Ovary (tissue), 10 donors: ENCODE measurements at regions of chr9 and their contacts with region 1.

Region 1: GRCh38 chr9:133149126-133150107 is 14.3 kb downstream of the GBGT1 start:
- DNase-seq: peak; percentile 91 to 94 (median 93)
- H3K4me3 ChIP-seq: peak overlapping the region; percentile 65
- H3K27ac ChIP-seq: peak overlapping the region; percentile 76 to 95
- H3K4me1 ChIP-seq: peaks cover 6% of the 10 kb centered on the region
- H3K27me3 ChIP-seq: no peaks in the 10 kb centered on the region
- CTCF ChIP-seq: peak in 1 of 3 donors; percentile 18
- EP300 ChIP-seq: no peak
- POLR2A ChIP-seq: peak; percentile 27

Region 2: GRCh38 chr9:133035669-133036068 is 113.7 kb before region 1 on chr9:
- intact Hi-C with region 1: loop called (anchors 5 to 10 kb)
- DNase-seq: no peak
- H3K4me3 ChIP-seq: no peak overlapping the region
- H3K27ac ChIP-seq: no peak overlapping the region
- H3K4me1 ChIP-seq: peaks cover 8% of the 10 kb centered on the region
- H3K27me3 ChIP-seq: no peaks in the 10 kb centered on the region
- CTCF ChIP-seq: no peak
- EP300 ChIP-seq: no peak
- POLR2A ChIP-seq: no peak

Region 3: GRCh38 chr9:133048569-133048968 is 100.8 kb before region 1 on chr9:
- intact Hi-C with region 1: loop called in 3 of 4 experiments (anchors 5 to 10 kb)
- DNase-seq: no peak
- H3K4me3 ChIP-seq: no peak overlapping the region
- H3K27ac ChIP-seq: no peak overlapping the region
- H3K4me1 ChIP-seq: peaks cover 2% of the 10 kb centered on the region
- H3K27me3 ChIP-seq: no peaks in the 10 kb centered on the region
- CTCF ChIP-seq: no peak
- EP300 ChIP-seq: no peak
- POLR2A ChIP-seq: no peak